ENCODE measurements at regions of chr19 and their contacts with region 1.

Region 1: GRCh38 chr19:14337510-14337909 is 43.7 kb upstream of the ADGRE5 start:
- DNase-seq: no peak
- H3K4me3 ChIP-seq: no peak overlapping the region
- CTCF ChIP-seq: no peak

Region 2: GRCh38 chr19:14265290-14266036 is 72.0 kb before region 1 on chr19:
- in situ Hi-C with region 1: loop called (anchors 10 kb)
- DNase-seq: no peak
- H3K4me3 ChIP-seq: no peak overlapping the region
- CTCF ChIP-seq: no peak